K562 (cell line): ENCODE measurements at regions of chr1 and their contacts with region 1.

Region 1: DNA sequence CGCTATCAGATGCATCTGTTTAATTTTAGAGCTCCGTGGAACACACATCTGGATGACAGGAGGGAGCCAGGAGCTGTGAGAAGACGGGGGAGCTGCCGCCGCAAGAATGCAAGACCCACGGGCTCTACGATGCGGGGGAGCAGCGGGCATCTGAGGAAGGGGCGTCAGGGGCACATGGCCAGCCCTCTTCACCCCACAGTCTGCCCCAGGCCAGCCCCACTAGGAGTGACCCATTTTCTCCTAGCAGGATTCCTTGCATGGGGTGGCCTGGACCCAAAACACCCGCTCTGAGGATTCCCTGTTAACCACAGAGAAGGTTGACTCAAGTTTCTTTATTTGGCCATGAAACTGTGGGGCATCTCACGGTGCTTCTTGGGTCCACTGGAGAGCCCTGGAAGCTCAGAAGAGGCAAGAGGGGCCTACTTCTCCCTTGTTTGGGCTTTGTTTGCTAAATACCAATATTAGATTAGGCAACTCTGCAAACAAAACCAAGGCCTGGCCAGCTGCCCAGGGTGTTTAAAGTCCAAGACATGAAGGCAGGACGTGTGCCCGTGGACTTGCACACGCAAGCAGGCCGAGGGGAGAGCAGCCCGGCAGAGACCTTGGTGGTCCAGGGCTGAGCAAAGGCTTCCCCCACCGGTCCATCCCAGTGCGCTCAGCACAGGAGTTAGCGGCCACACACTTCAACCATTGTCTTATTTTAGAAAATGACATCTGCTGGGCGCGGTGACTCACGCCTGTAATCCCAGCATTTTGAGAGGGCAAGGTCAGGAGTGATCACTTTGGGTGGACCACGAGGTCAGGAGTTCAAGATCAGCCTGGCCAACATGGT is 89.8 kb downstream of the DHRS3 start:
- DNase-seq: peak; percentile 62 to 93 (median 70)
- ATAC-seq: peak; percentile 78
- H3K4me3 ChIP-seq: no peak overlapping the region
- H3K27ac ChIP-seq: peak overlapping the region; percentile 89
- H3K4me1 ChIP-seq: peaks cover 44 to 49% of the 10 kb centered on the region in 2 experiments
- H3K27me3 ChIP-seq: no peaks in the 10 kb centered on the region
- CTCF ChIP-seq: no peak
- EP300 ChIP-seq: peak; percentile 44; the same call in 1 of the 2 replicates
- POLR2A ChIP-seq: no peak
- RAD21 ChIP-seq: peak in 1 of 2 experiments; percentile 19; a peak in 1 of 4 replicates

Region 2: DNA sequence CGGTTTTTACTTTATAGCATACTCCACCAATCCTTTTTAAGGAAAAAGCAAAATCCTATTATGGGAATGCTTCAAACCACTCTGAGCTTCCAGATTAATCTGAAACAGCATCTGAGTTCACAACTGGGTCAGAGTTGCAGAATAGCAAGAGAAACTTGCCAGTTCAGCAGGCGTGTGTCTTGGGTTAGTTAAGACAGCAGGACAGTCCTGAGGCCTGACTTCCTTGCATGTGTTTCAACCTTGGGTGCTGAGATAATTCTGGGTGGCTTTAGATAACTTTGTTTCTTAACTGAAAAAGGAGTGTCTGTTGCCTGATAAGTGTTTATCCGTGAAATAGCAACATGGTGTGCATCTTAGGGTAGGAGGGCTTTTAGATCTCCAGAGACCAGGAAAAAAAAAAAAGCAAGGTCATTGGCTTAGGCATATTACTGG is 79.5 kb before region 1 on chr1:
- CTCF ChIA-PET with region 1: no interaction called
- POLR2A ChIA-PET with region 1: no interaction called
- in situ Hi-C with region 1: no loop called
- intact Hi-C with region 1: loop called (anchors 1 kb)
- DNase-seq: peak; percentile 76 to 99 (median 85)
- ATAC-seq: peak; percentile 94
- H3K4me3 ChIP-seq: no peak overlapping the region
- H3K27ac ChIP-seq: peak overlapping the region; percentile 95
- H3K4me1 ChIP-seq: peaks cover 29 to 87% of the 10 kb centered on the region in 2 experiments
- H3K27me3 ChIP-seq: no peaks in the 10 kb centered on the region
- CTCF ChIP-seq: 0 out of 6 replicates have a peak, but pooled peaks of 1 of the 3 experiments have one; percentile 6
- EP300 ChIP-seq: peak; percentile 100
- POLR2A ChIP-seq: no peak
- RAD21 ChIP-seq: peak; percentile 33 to 52; a peak in 2 of 4 replicates

Region 3: DNA sequence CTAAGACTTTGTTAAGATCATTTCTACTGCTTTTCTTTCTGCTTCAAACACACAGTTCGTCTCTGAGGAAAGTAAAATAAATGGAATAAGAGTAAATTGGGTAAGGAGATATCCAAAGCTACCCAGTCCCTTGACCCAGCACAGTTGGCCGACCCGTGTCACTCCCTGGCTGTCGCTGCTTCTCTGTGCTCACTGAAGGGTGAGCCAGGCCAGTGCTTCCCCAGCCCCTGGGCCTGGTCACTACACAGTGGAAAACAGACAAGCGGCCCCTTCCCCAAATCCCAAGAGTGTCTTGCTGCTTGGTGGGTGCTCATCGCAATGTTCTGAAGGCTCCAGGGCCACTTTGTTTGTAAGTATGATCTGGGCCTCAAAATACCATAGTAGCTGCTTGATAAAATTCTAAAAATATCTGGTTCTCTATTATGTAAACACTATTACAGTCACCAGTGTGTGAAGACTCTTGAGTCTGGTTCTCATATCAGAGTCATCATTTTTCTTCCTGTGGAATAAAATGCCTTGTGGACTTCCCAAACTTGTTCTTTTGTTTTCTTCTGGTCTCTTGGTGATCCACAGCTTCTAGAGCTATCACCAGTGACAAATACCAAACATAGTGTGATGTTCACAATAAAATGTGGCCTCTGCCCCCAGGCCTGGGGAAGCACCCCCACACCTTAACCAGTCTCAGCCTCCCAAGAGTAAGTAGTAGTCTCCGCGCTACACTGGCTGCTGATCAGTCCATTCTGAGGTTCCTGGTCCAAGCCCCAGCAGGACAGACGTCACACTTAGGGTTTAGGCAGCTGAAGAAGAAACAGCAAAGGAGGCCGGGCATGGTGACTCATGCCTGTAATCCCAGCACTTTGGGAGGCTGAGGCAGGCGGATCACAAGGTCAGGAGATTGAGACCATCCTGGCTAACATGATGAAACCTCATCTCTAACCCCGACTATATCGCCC is 16.4 kb before region 1 on chr1:
- CTCF ChIA-PET with region 1: no interaction called
- POLR2A ChIA-PET with region 1: interaction called, 26 read pairs
- in situ Hi-C with region 1: no loop called
- intact Hi-C with region 1: no loop called
- DNase-seq: peak in 1 of 4 experiments; percentile 51
- ATAC-seq: peak; percentile 17
- H3K4me3 ChIP-seq: no peak overlapping the region
- H3K27ac ChIP-seq: peak overlapping the region; percentile 60
- H3K4me1 ChIP-seq: peaks cover 24 to 30% of the 10 kb centered on the region in 2 experiments
- H3K27me3 ChIP-seq: no peaks in the 10 kb centered on the region
- CTCF ChIP-seq: no peak
- EP300 ChIP-seq: no peak
- POLR2A ChIP-seq: no peak
- RAD21 ChIP-seq: no peak

Region 4: GRCh38 chr1:12539705-12540579 is 11.7 kb after region 1 on chr1:
- CTCF ChIA-PET with region 1: no interaction called
- POLR2A ChIA-PET with region 1: interaction called, 15 read pairs
- in situ Hi-C with region 1: no loop called
- intact Hi-C with region 1: no loop called
- DNase-seq: peak in 3 of 4 experiments; percentile 29 to 53 (median 35)
- ATAC-seq: no peak
- H3K4me3 ChIP-seq: no peak overlapping the region
- H3K27ac ChIP-seq: no peak overlapping the region
- H3K4me1 ChIP-seq: peaks cover 34% of the 10 kb centered on the region in 2 experiments
- H3K27me3 ChIP-seq: no peaks in the 10 kb centered on the region
- CTCF ChIP-seq: no peak
- EP300 ChIP-seq: no peak
- POLR2A ChIP-seq: no peak
- RAD21 ChIP-seq: no peak

Region 5: DNA sequence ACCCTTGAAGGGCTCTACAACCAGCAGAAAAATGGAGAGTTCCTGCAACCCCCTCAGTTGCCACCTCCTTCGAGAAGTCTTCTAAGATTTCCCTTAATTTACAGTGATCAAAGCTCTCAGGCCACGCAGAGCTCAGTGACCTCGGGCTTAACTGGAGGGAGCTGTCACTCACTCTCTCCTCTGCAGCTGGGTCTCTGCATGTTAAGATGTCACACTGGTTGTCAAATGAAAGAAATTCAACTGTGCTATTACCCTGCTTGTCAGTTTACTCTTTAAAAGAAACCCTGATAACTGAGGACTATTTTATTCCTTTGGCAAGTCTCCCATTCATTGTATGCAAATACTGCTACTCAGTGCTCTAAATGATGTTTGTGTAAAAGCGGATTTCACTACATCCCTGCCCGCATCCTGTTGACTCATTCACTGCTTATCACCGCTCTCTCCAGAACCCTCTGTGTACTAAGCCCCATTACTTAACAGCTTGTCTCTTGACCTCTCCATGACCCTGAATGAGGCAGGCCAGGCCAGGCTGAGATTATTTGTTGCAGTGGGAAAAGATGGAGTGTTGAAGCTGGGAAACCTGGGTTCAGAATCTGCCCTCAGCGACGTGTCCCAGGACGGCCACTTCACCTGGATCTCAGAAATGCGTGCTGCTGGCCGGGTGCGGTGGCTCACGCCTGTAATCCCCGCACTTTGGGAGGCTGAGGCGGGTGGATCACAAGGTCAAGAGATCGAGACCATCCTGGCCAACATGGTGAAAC is 76.1 kb after region 1 on chr1:
- CTCF ChIA-PET with region 1: no interaction called
- POLR2A ChIA-PET with region 1: interaction called, 4 read pairs
- in situ Hi-C with region 1: no loop called
- intact Hi-C with region 1: loop called (anchors 5 kb)
- DNase-seq: peak; percentile 91 to 97 (median 94)
- ATAC-seq: peak; percentile 91
- H3K4me3 ChIP-seq: no peak overlapping the region
- H3K27ac ChIP-seq: peak overlapping the region; percentile 81
- H3K4me1 ChIP-seq: peaks cover 38 to 43% of the 10 kb centered on the region in 2 experiments
- H3K27me3 ChIP-seq: no peaks in the 10 kb centered on the region
- CTCF ChIP-seq: 0 out of 6 replicates have a peak, but pooled peaks of 1 of the 3 experiments have one; percentile 8
- EP300 ChIP-seq: peak; percentile 99
- POLR2A ChIP-seq: no peak
- RAD21 ChIP-seq: peak; percentile 19 to 34; a peak in 3 of 4 replicates